WTC11 (cell line): ENCODE measurements at regions of chr7 and their contacts with region 1.

Region 1: GRCh38 chr7:2431260-2431867 is 28.0 kb downstream of the CHST12 start:
- DNase-seq: peak; percentile 66
- ATAC-seq: peak; percentile 97
- H3K4me3 Mint-ChIP-seq: no peak overlapping the region
- H3K27ac Mint-ChIP-seq: no peak overlapping the region
- H3K4me1 Mint-ChIP-seq: no peaks in the 10 kb centered on the region
- H3K27me3 Mint-ChIP-seq: no peaks in the 10 kb centered on the region
- CTCF ChIP-seq: peak; percentile 74

Region 2: DNA sequence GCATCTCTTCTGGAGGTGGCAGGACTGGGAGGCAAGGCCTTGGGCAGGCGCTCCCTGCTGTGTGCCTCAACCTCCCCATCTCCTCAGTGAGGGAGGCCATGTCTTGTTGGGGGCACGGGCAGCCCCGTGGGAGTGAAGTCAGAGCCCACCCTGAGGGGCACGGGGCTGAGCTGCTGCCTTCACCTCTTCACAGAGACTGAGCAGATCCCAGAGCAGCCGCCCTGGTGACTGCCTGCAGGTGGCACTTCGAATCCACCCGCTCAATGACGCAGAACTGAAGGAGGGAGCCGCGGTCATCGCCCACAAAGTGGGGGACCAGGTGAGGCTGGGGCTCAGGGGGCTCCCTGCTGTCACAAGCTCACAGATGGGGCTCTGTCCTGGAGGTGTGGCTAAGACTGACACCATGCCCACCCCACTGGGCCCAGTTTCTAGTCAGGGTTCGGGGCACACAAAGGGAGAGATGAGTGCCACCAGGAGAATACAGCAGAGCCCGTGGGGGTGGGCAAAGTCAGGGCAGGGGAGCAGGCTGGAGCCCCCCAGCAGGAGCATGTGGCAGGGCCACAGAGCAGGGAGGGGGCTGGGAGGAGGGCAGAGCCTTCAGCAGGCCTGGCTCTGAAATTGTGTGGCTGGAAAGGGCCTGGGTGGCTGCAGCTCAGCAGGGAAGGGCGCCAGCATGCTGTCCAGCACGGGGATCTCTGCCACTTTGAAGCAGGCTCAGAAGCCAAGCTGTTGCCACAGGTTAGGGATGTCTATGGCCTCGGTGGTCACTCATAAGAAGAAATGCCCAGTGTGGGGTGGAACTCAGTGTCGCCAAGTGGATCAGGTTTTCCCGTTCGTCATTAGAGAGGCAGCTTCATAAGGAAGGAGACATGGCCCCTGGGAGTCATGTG is 46.8 kb before region 1 on chr7:
- CTCF ChIA-PET with region 1: interaction called, 35 read pairs
- POLR2A ChIA-PET with region 1: no interaction called
- DNase-seq: no peak
- ATAC-seq: peak; percentile 13
- H3K4me3 Mint-ChIP-seq: no peak overlapping the region
- H3K27ac Mint-ChIP-seq: peak overlapping the region; percentile 65; the same call in 1 of the 2 replicates
- H3K4me1 Mint-ChIP-seq: peaks cover 9% of the 10 kb centered on the region
- H3K27me3 Mint-ChIP-seq: no peaks in the 10 kb centered on the region
- CTCF ChIP-seq: no peak

Region 3: GRCh38 chr7:2403014-2403717 is 28.2 kb before region 1 on chr7 and contains the start of gene CHST12:
- CTCF ChIA-PET with region 1: interaction called, 15 read pairs
- POLR2A ChIA-PET with region 1: no interaction called
- DNase-seq: peak; percentile 95
- ATAC-seq: peak; percentile 82
- H3K4me3 Mint-ChIP-seq: peak within 1 kb of the TSS; percentile 82
- H3K27ac Mint-ChIP-seq: peak within 1 kb of the TSS; percentile 95
- H3K4me1 Mint-ChIP-seq: peaks cover 28% of the 10 kb centered on the region
- H3K27me3 Mint-ChIP-seq: no peaks in the 10 kb centered on the region
- CTCF ChIP-seq: no peak
- total RNA-seq, gene CHST12: 18.3 to 21.7 TPM (median 20.7 TPM) in 3 replicates

Region 4: GRCh38 chr7:2411815-2412586 is 19.4 kb before region 1 on chr7:
- CTCF ChIA-PET with region 1: interaction called, 14 read pairs
- POLR2A ChIA-PET with region 1: interaction called, 3 read pairs
- DNase-seq: no peak
- ATAC-seq: no peak
- H3K4me3 Mint-ChIP-seq: no peak overlapping the region
- H3K27ac Mint-ChIP-seq: no peak overlapping the region
- H3K4me1 Mint-ChIP-seq: peaks cover 32% of the 10 kb centered on the region
- H3K27me3 Mint-ChIP-seq: no peaks in the 10 kb centered on the region
- CTCF ChIP-seq: no peak

Region 5: DNA sequence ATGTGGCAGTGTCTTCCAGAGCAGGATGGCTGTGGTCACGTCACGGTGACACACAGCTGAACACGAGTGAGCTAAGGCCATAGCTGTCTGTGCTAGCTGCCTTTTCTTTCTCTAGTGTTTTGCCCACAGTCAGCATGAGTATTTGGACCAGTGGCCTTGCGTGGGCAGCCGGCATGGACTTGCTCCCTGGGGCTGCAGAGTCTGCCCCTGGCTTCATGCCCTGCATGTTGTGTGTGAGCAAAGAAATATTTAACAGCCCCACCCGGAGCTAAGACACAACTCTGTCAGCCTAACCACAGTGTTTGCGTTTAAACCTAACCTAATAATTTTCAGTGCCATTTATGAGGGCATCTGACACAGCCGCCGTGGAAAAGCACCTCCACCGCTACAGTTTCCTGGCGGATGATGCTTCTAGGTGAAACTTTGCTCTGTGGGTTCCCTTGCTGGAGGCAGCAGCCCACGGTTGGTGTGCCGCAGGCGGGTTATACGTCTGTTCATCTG is 13.3 kb before region 1 on chr7:
- CTCF ChIA-PET with region 1: interaction called, 24 read pairs
- POLR2A ChIA-PET with region 1: interaction called, 3 read pairs
- DNase-seq: no peak
- ATAC-seq: no peak
- H3K4me3 Mint-ChIP-seq: no peak overlapping the region
- H3K27ac Mint-ChIP-seq: no peak overlapping the region
- H3K4me1 Mint-ChIP-seq: peaks cover 16% of the 10 kb centered on the region
- H3K27me3 Mint-ChIP-seq: no peaks in the 10 kb centered on the region
- CTCF ChIP-seq: no peak

Region 6: DNA sequence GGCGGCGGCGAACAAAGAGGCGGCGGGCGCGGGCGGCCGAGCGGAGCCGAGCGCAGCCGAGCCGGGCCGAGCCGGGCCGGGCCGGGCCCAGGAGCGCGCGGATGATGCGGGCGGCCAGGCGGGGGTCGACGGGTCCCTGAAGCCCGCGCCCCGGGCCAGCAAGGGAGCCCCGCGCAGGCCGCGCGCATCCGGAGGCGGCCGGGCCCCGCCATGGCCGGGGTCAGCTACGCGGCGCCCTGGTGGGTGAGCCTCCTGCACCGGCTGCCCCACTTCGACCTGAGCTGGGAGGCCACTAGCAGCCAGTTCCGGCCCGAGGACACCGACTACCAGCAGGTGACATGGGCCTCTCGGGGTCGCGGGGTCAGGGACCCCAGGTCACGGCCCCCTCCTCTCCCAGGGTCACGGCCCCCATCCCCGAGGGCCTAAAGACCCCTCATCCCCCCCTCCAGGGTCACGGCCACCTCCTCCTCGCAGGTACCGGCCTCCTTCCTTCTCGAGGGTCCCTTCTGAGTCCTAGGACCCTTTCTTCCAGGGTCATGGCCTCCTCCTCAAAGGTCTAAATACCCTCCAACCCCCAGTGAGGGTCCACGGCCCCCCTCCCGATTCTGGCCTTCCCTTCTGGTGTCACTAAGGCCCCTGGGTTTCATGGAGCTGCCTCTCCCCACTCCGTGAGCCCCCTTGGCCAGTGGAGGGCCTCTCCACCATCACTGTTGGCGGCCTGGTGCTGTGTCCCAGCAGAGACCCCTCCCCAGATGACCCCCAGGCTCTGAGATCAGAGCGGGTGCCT is 200.8 kb after region 1 on chr7 and contains the start of gene TTYH3:
- CTCF ChIA-PET with region 1: no interaction called
- POLR2A ChIA-PET with region 1: no interaction called
- DNase-seq: no peak
- ATAC-seq: peak; percentile 37; the same call in 1 of the 2 replicates
- H3K4me3 Mint-ChIP-seq: peak within 1 kb of the TSS; percentile 86
- H3K27ac Mint-ChIP-seq: peak within 1 kb of the TSS; percentile 96
- H3K4me1 Mint-ChIP-seq: peaks cover 23% of the 10 kb centered on the region
- H3K27me3 Mint-ChIP-seq: peaks cover 2% of the 10 kb centered on the region; the same call in 1 of the 2 replicates
- CTCF ChIP-seq: no peak
- total RNA-seq, gene TTYH3: 178 to 190 TPM (median 181 TPM) in 3 replicates

Region 7: DNA sequence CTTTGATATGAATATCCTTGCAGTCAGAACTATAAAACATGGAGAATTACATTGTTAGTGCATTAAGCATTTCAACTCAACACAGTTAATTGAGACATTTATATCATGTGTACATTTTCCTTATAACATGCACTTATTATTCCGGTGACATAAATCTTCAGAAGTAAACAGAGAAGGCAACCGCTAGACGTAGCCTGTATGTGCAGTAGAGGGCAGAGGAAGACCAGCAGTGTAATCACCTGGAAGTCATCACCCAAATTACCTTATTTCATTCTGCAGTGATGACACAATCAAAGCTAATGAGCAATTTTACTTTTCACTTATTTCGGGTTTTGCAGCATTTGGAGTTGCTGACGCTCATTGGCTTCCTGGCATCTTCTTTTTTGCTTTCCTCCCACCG is 1264.2 kb after region 1 on chr7:
- CTCF ChIA-PET with region 1: no interaction called
- POLR2A ChIA-PET with region 1: no interaction called
- DNase-seq: no peak
- ATAC-seq: no peak
- H3K4me3 Mint-ChIP-seq: no peak overlapping the region
- H3K27ac Mint-ChIP-seq: no peak overlapping the region
- H3K4me1 Mint-ChIP-seq: peaks cover 24% of the 10 kb centered on the region
- H3K27me3 Mint-ChIP-seq: no peaks in the 10 kb centered on the region
- CTCF ChIP-seq: no peak